GM23248 (cell line): ENCODE measurements at regions of chr1 and their contacts with region 1.

Region 1: GRCh38 chr1:158087320-158087927 is 93.3 kb upstream of the CD1D start:
- DNase-seq: peak; percentile 81
- H3K4me3 ChIP-seq: no peak overlapping the region
- H3K27ac ChIP-seq: no peak overlapping the region
- H3K4me1 ChIP-seq: no peaks in the 10 kb centered on the region
- H3K27me3 ChIP-seq: no peaks in the 10 kb centered on the region

Region 2: DNA sequence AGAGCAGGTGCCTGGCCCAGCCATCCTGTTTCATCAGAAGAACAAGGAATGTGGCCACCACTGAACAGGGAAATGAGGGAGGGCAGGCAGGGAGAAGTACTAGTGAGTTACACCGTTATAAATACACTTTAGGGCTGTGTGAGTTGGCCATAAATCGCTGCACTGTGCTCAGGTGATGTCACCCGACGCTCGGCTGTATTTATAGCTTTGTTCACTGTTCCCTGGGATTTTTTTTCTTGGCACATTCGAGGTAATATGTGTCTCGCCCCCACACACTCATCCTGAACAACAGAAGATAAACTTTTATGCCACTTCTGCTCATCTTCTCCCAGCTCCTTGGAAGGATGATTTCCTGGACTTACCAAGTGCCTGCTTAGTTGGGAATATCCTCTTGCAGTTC is 103.0 kb before region 1 on chr1:
- in situ Hi-C with region 1: loop called (anchors 10 kb)
- DNase-seq: peak; percentile 28
- H3K4me3 ChIP-seq: no peak overlapping the region
- H3K27ac ChIP-seq: no peak overlapping the region
- H3K4me1 ChIP-seq: no peaks in the 10 kb centered on the region
- H3K27me3 ChIP-seq: no peaks in the 10 kb centered on the region